Pancreas (tissue), 10 donors: ENCODE measurements at regions of chr15 and their contacts with region 1.

Region 1: GRCh38 chr15:68875377-68876116 is 54.8 kb upstream of the SPESP1 start:
- DNase-seq: peak; percentile 83 to 99 (median 94)
- ATAC-seq: peak; percentile 94 to 99 (median 98)
- H3K4me3 ChIP-seq: peak overlapping the region in 2 of 4 donors; percentile 22 to 37
- H3K27ac ChIP-seq: no peak overlapping the region
- H3K4me1 ChIP-seq: no peaks in the 10 kb centered on the region
- H3K27me3 ChIP-seq: no peaks in the 10 kb centered on the region
- CTCF ChIP-seq: peak; percentile 78 to 87 (median 84)

Region 2: GRCh38 chr15:68559345-68560310 is 315.9 kb before region 1 on chr15:
- intact Hi-C with region 1: loop called in 2 of 3 experiments (anchors 5 to 10 kb)
- DNase-seq: peak; percentile 44 to 94 (median 74)
- ATAC-seq: peak; percentile 91 to 99 (median 98)
- H3K4me3 ChIP-seq: peak overlapping the region in 2 of 4 donors; percentile 16 to 41
- H3K27ac ChIP-seq: no peak overlapping the region
- H3K4me1 ChIP-seq: peaks cover 0 to 2% (median 0%) of the 10 kb centered on the region in 3 donors
- H3K27me3 ChIP-seq: peaks cover 0 to 7% (median 0%) of the 10 kb centered on the region in 4 donors
- CTCF ChIP-seq: peak; percentile 90 to 94 (median 92)

Region 3: GRCh38 chr15:68730471-68730919 is 145.1 kb before region 1 on chr15:
- intact Hi-C with region 1: loop called in 2 of 3 experiments (anchors 10 kb)
- DNase-seq: peak in 1 of 6 donors; percentile 40
- ATAC-seq: peak; percentile 43 to 82 (median 74)
- H3K4me3 ChIP-seq: no peak overlapping the region
- H3K27ac ChIP-seq: no peak overlapping the region
- H3K4me1 ChIP-seq: no peaks in the 10 kb centered on the region
- H3K27me3 ChIP-seq: no peaks in the 10 kb centered on the region
- CTCF ChIP-seq: peak in 3 of 4 donors; percentile 8 to 38 (median 30)

Region 4: GRCh38 chr15:68783226-68784058 is 92.1 kb before region 1 on chr15:
- intact Hi-C with region 1: loop called in 1 of 3 experiments (anchors 10 kb)
- DNase-seq: peak in 4 of 6 donors; percentile 36 to 83 (median 56)
- ATAC-seq: peak; percentile 73 to 81 (median 77)
- H3K4me3 ChIP-seq: no peak overlapping the region
- H3K27ac ChIP-seq: no peak overlapping the region
- H3K4me1 ChIP-seq: peaks cover 5 to 14% (median 11%) of the 10 kb centered on the region in 3 donors
- H3K27me3 ChIP-seq: no peaks in the 10 kb centered on the region
- CTCF ChIP-seq: peak; percentile 36 to 64 (median 48)